ENCODE measurements at regions of chr12 and their contacts with region 1.

Region 1: DNA sequence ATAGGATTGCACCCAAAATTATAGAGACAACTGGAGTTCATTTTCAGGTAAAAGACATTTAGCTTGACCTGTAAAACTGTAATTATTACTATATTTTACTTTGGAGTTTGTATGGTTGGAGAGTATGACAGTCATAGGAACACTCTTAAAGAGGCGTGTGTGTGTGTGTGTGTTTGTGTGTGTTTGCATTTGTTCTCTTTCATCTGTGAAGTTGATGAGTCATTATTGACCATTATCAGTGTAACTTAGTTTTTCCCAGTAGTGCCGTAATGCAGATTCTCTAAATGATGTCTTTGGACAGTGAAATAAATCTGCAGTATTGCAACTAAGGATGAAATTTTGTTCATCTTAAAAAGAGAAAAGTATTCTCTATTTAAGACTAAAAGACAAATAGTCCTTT is 13.0 kb downstream of the WASHC4 start:
- DNase-seq: no peak
- ATAC-seq: no peak
- H3K4me3 ChIP-seq: no peak overlapping the region
- H3K4me3 Mint-ChIP-seq: no peak overlapping the region
- H3K27ac ChIP-seq: no peak overlapping the region
- H3K27ac Mint-ChIP-seq: peak overlapping the region; percentile 32
- H3K4me1 ChIP-seq: no peaks in the 10 kb centered on the region
- H3K4me1 Mint-ChIP-seq: peaks cover 4% of the 10 kb centered on the region
- H3K27me3 ChIP-seq: no peaks in the 10 kb centered on the region
- H3K27me3 Mint-ChIP-seq: no peaks in the 10 kb centered on the region
- CTCF ChIP-seq: no peak

Region 2: GRCh38 chr12:104064031-104064822 is 1056.3 kb before region 1 on chr12 and contains the start of gene HCFC2:
- CTCF ChIA-PET with region 1: no interaction called
- POLR2A ChIA-PET with region 1: no interaction called
- intact Hi-C with region 1: no loop called
- DNase-seq: peak; percentile 94
- ATAC-seq: peak; percentile 92
- H3K4me3 ChIP-seq: peak within 1 kb of the TSS; percentile 80 to 95 (median 85)
- H3K4me3 Mint-ChIP-seq: peak within 1 kb of the TSS; percentile 94
- H3K27ac ChIP-seq: peak within 1 kb of the TSS; percentile 36 to 79
- H3K27ac Mint-ChIP-seq: peak within 1 kb of the TSS; percentile 93
- H3K4me1 ChIP-seq: peaks cover 10 to 14% of the 10 kb centered on the region in 2 donors
- H3K4me1 Mint-ChIP-seq: peaks cover 17% of the 10 kb centered on the region
- H3K27me3 ChIP-seq: no peaks in the 10 kb centered on the region
- H3K27me3 Mint-ChIP-seq: peaks cover 9% of the 10 kb centered on the region
- CTCF ChIP-seq: no peak
- total RNA-seq, gene HCFC2: 10.5 and 11.6 TPM in 2 replicates

Region 3: GRCh38 chr12:105158876-105159275 is 38.3 kb after region 1 on chr12:
- CTCF ChIA-PET with region 1: no interaction called
- POLR2A ChIA-PET with region 1: no interaction called
- intact Hi-C with region 1: loop called (anchors 5 kb)
- DNase-seq: no peak
- ATAC-seq: no peak
- H3K4me3 ChIP-seq: no peak overlapping the region
- H3K4me3 Mint-ChIP-seq: no peak overlapping the region
- H3K27ac ChIP-seq: peak overlapping the region in 1 of 2 donors; percentile 6
- H3K27ac Mint-ChIP-seq: no peak overlapping the region
- H3K4me1 ChIP-seq: no peaks in the 10 kb centered on the region
- H3K4me1 Mint-ChIP-seq: no peaks in the 10 kb centered on the region
- H3K27me3 ChIP-seq: no peaks in the 10 kb centered on the region
- H3K27me3 Mint-ChIP-seq: no peaks in the 10 kb centered on the region
- CTCF ChIP-seq: no peak

Region 4: DNA sequence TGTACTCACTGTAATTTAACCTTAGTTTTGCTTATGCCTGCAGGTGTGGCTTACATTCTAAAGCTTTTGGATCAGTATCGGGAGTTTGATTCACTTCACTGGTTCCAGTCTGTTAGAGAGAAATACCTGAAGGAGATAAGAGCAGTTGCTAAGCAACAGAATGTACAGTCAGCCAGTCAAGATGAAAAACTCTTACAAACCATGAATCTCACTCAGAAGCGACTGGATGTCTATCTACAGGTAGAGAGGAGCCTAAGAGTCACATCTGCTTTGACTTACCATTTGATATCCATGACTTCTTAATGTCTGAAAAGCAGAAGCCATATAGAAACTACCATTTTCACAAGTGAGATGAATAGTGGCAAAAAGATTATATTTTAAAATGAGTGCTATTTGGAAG is 43.5 kb after region 1 on chr12:
- CTCF ChIA-PET with region 1: interaction called, 3 read pairs
- POLR2A ChIA-PET with region 1: no interaction called
- intact Hi-C with region 1: loop called (anchors 5 kb)
- DNase-seq: no peak
- ATAC-seq: no peak
- H3K4me3 ChIP-seq: no peak overlapping the region
- H3K4me3 Mint-ChIP-seq: no peak overlapping the region
- H3K27ac ChIP-seq: no peak overlapping the region
- H3K27ac Mint-ChIP-seq: no peak overlapping the region
- H3K4me1 ChIP-seq: no peaks in the 10 kb centered on the region
- H3K4me1 Mint-ChIP-seq: no peaks in the 10 kb centered on the region
- H3K27me3 ChIP-seq: no peaks in the 10 kb centered on the region
- H3K27me3 Mint-ChIP-seq: no peaks in the 10 kb centered on the region
- CTCF ChIP-seq: no peak